Heart right ventricle (tissue), 16 donors: ENCODE measurements at regions of chr4 and their contacts with region 1.

Region 1: GRCh38 chr4:126957556-126957955 is 675.2 kb upstream of the INTU start:
- DNase-seq: no peak
- ATAC-seq: no peak
- H3K4me3 ChIP-seq: no peak overlapping the region
- H3K27ac ChIP-seq: no peak overlapping the region
- H3K4me1 ChIP-seq: peaks cover 0 to 9% (median 0%) of the 10 kb centered on the region in 9 donors
- H3K27me3 ChIP-seq: no peaks in the 10 kb centered on the region
- CTCF ChIP-seq: peak in 4 of 9 donors; percentile 6 to 50 (median 40)

Region 2: DNA sequence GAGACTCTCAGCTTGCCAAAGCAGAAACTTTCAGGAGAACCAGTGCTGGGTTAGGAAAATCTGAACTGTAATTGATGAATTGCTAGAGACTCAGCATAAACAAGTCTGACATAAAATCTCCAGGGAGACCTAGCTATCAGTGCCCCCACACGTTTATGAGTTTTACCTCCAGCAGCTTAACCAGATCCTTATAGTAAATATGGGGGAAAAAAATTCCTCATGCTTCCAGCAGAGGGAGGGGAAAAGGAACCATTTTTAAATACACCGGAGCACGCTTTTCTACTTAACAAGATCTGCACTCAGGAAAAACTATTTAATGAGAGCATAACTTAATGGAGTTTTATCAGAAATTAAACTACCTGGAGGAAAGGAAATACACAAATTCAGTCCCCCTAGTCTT is 365.5 kb before region 1 on chr4:
- intact Hi-C with region 1: loop called in 1 of 10 experiments (anchors 10 kb)
- DNase-seq: no peak
- ATAC-seq: no peak
- H3K4me3 ChIP-seq: no peak overlapping the region
- H3K27ac ChIP-seq: no peak overlapping the region
- H3K4me1 ChIP-seq: no peaks in the 10 kb centered on the region
- H3K27me3 ChIP-seq: no peaks in the 10 kb centered on the region
- CTCF ChIP-seq: peak in 6 of 9 donors; percentile 17 to 33 (median 23)

Region 3: GRCh38 chr4:126627255-126627654 is 330.3 kb before region 1 on chr4:
- intact Hi-C with region 1: loop called in 1 of 10 experiments (anchors 5 kb)
- DNase-seq: no peak
- ATAC-seq: no peak
- H3K4me3 ChIP-seq: no peak overlapping the region
- H3K27ac ChIP-seq: no peak overlapping the region
- H3K4me1 ChIP-seq: peaks cover 0 to 9% (median 0%) of the 10 kb centered on the region in 9 donors
- H3K27me3 ChIP-seq: no peaks in the 10 kb centered on the region
- CTCF ChIP-seq: peak in 6 of 9 donors; percentile 9 to 35 (median 26)